ENCODE measurements at regions of chr10 and their contacts with region 1.

Region 1: GRCh38 chr10:28091913-28092312 is 93.0 kb upstream of the ODAD2 start:
- DNase-seq: no peak
- H3K4me3 ChIP-seq: no peak overlapping the region
- H3K4me3 Mint-ChIP-seq: no peak overlapping the region
- H3K27ac Mint-ChIP-seq: no peak overlapping the region
- H3K4me1 ChIP-seq: no peaks in the 10 kb centered on the region
- H3K4me1 Mint-ChIP-seq: no peaks in the 10 kb centered on the region
- H3K27me3 ChIP-seq: no peaks in the 10 kb centered on the region
- H3K27me3 Mint-ChIP-seq: no peaks in the 10 kb centered on the region
- CTCF ChIP-seq: no peak

Region 2: DNA sequence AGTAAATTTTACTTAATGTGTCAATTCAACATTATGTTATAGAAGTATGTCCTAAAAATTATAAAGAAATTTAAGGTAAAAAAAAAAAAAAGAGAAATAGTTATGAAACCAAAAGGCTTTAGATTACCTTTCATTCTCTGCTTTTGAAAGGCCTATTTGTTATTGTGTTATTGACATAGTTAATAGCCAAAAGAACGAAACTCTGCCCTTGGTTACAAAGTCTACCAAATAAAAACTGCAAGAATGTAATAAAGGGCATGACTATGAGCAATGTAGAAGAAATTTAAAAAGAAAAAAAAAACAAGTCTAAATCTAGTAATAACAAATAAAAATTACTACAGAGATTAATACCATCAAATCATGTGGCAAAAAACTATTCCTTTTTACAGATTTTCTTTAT is 861.9 kb before region 1 on chr10:
- CTCF ChIA-PET with region 1: no interaction called
- POLR2A ChIA-PET with region 1: interaction called, 10 read pairs
- intact Hi-C with region 1: no loop called
- DNase-seq: no peak
- H3K4me3 ChIP-seq: no peak overlapping the region
- H3K4me3 Mint-ChIP-seq: no peak overlapping the region
- H3K27ac Mint-ChIP-seq: no peak overlapping the region
- H3K4me1 ChIP-seq: peaks cover 15% of the 10 kb centered on the region
- H3K4me1 Mint-ChIP-seq: peaks cover 6% of the 10 kb centered on the region
- H3K27me3 ChIP-seq: no peaks in the 10 kb centered on the region
- H3K27me3 Mint-ChIP-seq: no peaks in the 10 kb centered on the region
- CTCF ChIP-seq: no peak